Calu3 (cell line): ENCODE measurements at regions of chr2 and their contacts with region 1.

Region 1: GRCh38 chr2:159516241-159516766 is 100.0 kb downstream of the BAZ2B start:
- DNase-seq: peak; percentile 37
- H3K4me3 Mint-ChIP-seq: peak overlapping the region; percentile 79
- H3K27ac Mint-ChIP-seq: peak overlapping the region; percentile 97
- H3K4me1 Mint-ChIP-seq: peaks cover 24% of the 10 kb centered on the region
- H3K27me3 Mint-ChIP-seq: no peaks in the 10 kb centered on the region
- CTCF ChIP-seq: no peak

Region 2: DNA sequence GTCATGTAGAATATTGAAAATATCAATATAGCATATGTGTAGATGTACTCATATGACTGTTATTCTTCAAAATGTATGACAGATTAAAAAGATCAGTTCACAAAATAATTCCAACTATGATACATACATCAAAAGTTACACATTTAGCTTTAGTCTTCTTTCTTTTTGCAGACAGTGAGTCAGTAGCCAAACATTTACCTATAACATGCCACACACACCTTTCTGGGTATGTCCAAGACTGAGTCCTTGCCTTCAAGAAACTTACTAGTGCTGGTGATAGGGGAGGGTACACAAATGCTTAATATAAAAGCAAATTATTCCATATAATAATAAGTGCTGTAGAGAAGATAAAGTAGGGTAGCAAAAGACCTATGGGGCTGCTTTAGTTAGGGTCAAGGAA is 76.9 kb before region 1 on chr2:
- CTCF ChIA-PET with region 1: no interaction called
- intact Hi-C with region 1: loop called (anchors 5 kb)
- DNase-seq: no peak
- H3K4me3 Mint-ChIP-seq: peak overlapping the region; percentile 21
- H3K27ac Mint-ChIP-seq: no peak overlapping the region
- H3K4me1 Mint-ChIP-seq: peaks cover 17% of the 10 kb centered on the region
- H3K27me3 Mint-ChIP-seq: no peaks in the 10 kb centered on the region
- CTCF ChIP-seq: no peak

Region 3: GRCh38 chr2:159557451-159558034 is 41.2 kb after region 1 on chr2:
- CTCF ChIA-PET with region 1: no interaction called
- intact Hi-C with region 1: no loop called
- DNase-seq: peak; percentile 7
- H3K4me3 Mint-ChIP-seq: no peak overlapping the region
- H3K27ac Mint-ChIP-seq: peak overlapping the region; percentile 26
- H3K4me1 Mint-ChIP-seq: peaks cover 12% of the 10 kb centered on the region
- H3K27me3 Mint-ChIP-seq: no peaks in the 10 kb centered on the region
- CTCF ChIP-seq: no peak

Region 4: DNA sequence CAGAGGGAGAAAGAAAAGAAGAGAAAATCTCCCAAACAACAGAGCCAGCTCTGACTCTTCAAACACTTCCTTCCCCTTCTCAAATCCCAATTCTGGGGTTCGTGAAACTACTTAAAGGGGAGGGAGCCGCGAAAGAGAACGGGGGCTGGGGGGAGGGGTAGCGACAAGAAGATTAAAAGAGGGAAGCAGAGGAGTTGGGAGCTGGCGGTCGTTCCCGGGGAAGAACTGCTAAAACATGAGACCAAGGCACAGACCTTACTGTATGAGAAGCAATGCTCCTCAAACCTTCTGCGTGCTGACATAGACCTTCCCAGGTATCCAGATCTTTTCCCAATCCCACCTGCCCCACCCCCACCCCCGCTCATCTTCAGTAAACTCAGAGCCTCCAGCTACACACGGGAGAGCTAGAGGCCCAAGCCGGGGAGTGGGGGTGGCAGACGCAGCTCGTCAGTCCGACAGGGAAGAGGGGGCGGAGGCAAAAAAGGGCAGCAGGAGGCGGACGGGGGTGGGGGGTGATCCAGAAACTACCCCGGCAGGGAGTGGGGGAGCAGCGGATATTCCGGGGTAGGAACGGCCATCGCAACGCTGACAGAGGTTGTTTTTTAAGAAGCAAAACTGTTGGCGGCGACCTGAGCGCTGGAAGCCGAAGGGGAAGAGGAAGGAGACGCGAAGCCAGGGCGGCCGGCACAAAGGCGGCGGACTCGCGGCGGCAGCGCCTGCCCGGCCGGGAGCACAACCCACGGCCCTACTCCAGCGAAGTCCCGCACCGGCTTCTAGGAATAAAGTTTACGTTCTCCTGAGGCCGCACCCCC is 99.0 kb after region 1 on chr2:
- CTCF ChIA-PET with region 1: no interaction called
- intact Hi-C with region 1: loop called (anchors 2 kb)
- DNase-seq: peak; percentile 88
- H3K4me3 Mint-ChIP-seq: peak overlapping the region; percentile 89
- H3K27ac Mint-ChIP-seq: peak overlapping the region; percentile 100
- H3K4me1 Mint-ChIP-seq: peaks cover 29% of the 10 kb centered on the region
- H3K27me3 Mint-ChIP-seq: no peaks in the 10 kb centered on the region
- CTCF ChIP-seq: no peak